ENCODE measurements at regions of chr9 and their contacts with region 1.

Region 1: DNA sequence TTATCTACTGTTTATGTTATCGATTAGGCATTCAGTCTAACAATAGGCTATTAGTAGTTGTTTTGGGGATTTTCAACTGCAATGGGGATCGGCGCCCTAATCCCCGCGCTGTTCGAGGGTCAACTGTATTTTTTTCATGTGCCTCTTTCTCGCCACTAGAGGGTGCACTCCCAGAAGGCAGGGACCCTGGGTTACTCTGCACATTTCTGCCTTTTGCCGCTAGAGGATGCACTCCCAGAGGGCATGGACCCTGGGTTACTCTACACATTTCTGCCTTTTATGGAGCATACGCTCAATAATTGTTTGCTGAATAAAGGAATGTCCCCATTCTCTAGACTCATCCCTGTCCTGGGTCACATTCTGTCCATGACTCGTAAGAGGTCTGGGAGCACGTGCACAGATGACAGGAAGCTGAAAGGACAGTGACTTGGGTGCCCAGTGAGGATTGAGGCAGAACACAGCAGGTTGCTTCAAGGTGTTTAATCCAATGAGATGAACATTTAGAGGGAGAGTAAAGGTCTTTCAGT is 27.9 kb upstream of the RECK start:
- DNase-seq: peak; percentile 83
- ATAC-seq: peak; percentile 99
- H3K4me3 Mint-ChIP-seq: no peak overlapping the region
- H3K27ac Mint-ChIP-seq: no peak overlapping the region
- H3K4me1 Mint-ChIP-seq: peaks cover 13% of the 10 kb centered on the region
- H3K27me3 Mint-ChIP-seq: peaks cover 28% of the 10 kb centered on the region
- CTCF ChIP-seq: peak; percentile 99

Region 2: GRCh38 chr9:35910613-35911359 is 98.1 kb before region 1 on chr9:
- CTCF ChIA-PET with region 1: interaction called, 12 read pairs
- POLR2A ChIA-PET with region 1: no interaction called
- intact Hi-C with region 1: no loop called
- DNase-seq: peak; percentile 68
- ATAC-seq: peak; percentile 75
- H3K4me3 Mint-ChIP-seq: no peak overlapping the region
- H3K27ac Mint-ChIP-seq: peak overlapping the region; percentile 85
- H3K4me1 Mint-ChIP-seq: peaks cover 47% of the 10 kb centered on the region
- H3K27me3 Mint-ChIP-seq: no peaks in the 10 kb centered on the region
- CTCF ChIP-seq: peak; percentile 38

Region 3: GRCh38 chr9:35960039-35960655 is 48.7 kb before region 1 on chr9:
- CTCF ChIA-PET with region 1: interaction called, 24 read pairs
- POLR2A ChIA-PET with region 1: no interaction called
- intact Hi-C with region 1: no loop called
- DNase-seq: no peak
- ATAC-seq: no peak
- H3K4me3 Mint-ChIP-seq: no peak overlapping the region
- H3K27ac Mint-ChIP-seq: no peak overlapping the region
- H3K4me1 Mint-ChIP-seq: no peaks in the 10 kb centered on the region
- H3K27me3 Mint-ChIP-seq: no peaks in the 10 kb centered on the region
- CTCF ChIP-seq: no peak

Region 4: DNA sequence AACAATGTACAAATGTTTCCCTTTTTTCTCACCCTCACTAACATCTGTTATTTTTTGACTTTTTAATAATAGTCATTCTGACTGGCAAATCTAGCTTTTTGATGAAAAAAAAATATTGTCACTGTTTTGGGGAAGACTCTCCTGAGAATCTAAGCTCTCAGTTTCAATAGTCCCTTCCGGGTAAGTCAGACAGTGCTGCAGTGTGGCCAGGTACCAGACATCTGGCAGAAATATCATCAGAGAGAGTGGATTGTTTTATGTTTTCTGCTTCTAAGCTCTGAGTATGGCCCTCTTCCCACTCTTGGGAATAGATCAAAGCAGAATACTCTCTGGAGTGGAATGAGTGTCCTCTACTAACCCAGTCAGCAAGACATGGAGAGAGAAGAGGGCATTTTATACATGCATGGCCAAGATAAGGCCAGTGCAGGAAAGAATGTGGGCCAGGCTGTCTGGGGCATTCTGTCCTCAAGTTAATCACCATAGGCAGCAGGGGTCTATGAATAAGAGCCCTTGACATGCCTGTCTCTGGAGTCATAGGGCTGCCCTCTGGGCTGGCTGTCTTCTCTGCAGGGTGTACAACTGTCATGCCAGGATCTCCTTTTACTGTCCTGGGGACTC is 12.4 kb before region 1 on chr9:
- CTCF ChIA-PET with region 1: interaction called, 24 read pairs
- POLR2A ChIA-PET with region 1: no interaction called
- intact Hi-C with region 1: no loop called
- DNase-seq: no peak
- ATAC-seq: no peak
- H3K4me3 Mint-ChIP-seq: no peak overlapping the region
- H3K27ac Mint-ChIP-seq: no peak overlapping the region
- H3K4me1 Mint-ChIP-seq: no peaks in the 10 kb centered on the region
- H3K27me3 Mint-ChIP-seq: peaks cover 19% of the 10 kb centered on the region
- CTCF ChIP-seq: no peak

Region 5: GRCh38 chr9:36029765-36030528 is 21.1 kb after region 1 on chr9:
- CTCF ChIA-PET with region 1: interaction called, 136 read pairs
- POLR2A ChIA-PET with region 1: no interaction called
- intact Hi-C with region 1: no loop called
- DNase-seq: no peak
- ATAC-seq: no peak
- H3K4me3 Mint-ChIP-seq: no peak overlapping the region
- H3K27ac Mint-ChIP-seq: no peak overlapping the region
- H3K4me1 Mint-ChIP-seq: no peaks in the 10 kb centered on the region
- H3K27me3 Mint-ChIP-seq: no peaks in the 10 kb centered on the region
- CTCF ChIP-seq: no peak

Region 6: GRCh38 chr9:36074870-36075532 is 66.2 kb after region 1 on chr9:
- CTCF ChIA-PET with region 1: interaction called, 10 read pairs
- POLR2A ChIA-PET with region 1: no interaction called
- intact Hi-C with region 1: no loop called
- DNase-seq: no peak
- ATAC-seq: no peak
- H3K4me3 Mint-ChIP-seq: no peak overlapping the region
- H3K27ac Mint-ChIP-seq: no peak overlapping the region
- H3K4me1 Mint-ChIP-seq: no peaks in the 10 kb centered on the region
- H3K27me3 Mint-ChIP-seq: no peaks in the 10 kb centered on the region
- CTCF ChIP-seq: no peak

Region 7: DNA sequence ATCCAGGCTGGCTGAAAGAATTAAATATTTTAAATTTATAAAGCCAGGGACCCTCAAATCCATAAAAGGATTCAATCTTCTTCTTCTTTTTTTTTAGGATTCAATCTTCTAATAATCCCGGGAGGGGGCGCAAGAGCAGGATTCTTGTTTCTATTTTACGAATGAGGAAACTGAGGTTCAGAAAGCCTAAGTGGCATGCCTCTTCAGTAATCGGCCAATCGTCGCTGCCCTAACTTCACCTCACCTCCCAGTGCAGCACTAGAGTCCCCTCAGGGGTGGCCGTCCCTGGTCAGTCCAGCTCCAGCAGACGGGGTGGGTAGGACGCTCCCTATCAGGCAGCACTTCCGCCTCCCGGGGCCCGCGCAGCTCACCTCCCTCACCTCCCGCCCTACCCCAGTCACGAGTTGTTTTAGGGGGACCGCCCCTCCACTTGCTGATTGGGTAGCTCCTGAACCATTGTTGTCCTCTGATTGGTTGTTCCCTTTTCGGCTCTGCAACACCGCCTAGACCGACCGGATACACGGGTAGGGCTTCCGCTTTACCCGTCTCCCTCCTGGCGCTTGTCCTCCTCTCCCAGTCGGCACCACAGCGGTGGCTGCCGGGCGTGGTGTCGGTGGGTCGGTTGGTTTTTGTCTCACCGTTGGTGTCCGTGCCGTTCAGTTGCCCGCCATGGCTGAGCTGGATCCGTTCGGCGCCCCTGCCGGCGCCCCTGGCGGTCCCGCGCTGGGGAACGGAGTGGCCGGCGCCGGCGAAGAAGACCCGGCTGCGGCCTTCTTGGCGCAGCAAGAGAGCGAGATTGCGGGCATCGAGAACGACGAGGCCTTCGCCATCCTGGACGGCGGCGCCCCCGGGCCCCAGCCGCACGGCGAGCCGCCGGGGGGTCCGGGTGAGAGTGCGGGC is 181.8 kb after region 1 on chr9 and contains the start of gene CLTA:
- CTCF ChIA-PET with region 1: interaction called, 15 read pairs
- POLR2A ChIA-PET with region 1: no interaction called
- intact Hi-C with region 1: no loop called
- DNase-seq: peak; percentile 97
- ATAC-seq: peak; percentile 99
- H3K4me3 Mint-ChIP-seq: peak within 1 kb of the TSS; percentile 94
- H3K27ac Mint-ChIP-seq: peak within 1 kb of the TSS; percentile 90
- H3K4me1 Mint-ChIP-seq: peaks cover 40% of the 10 kb centered on the region
- H3K27me3 Mint-ChIP-seq: no peaks in the 10 kb centered on the region
- CTCF ChIP-seq: peak; percentile 52
- total RNA-seq, gene CLTA: 116 to 119 TPM

Measured in activated CD8-positive, alpha-beta T cell treated with anti-CD3 and anti-CD28 coated beads for 36 hours (primary cell).